ENCODE measurements at regions of chr19 and their contacts with region 1.

Region 1: GRCh38 chr19:42176990-42177685 is 40.3 kb downstream of the DEDD2 start:
- DNase-seq: peak; percentile 85
- ATAC-seq: peak; percentile 84
- H3K4me3 Mint-ChIP-seq: no peak overlapping the region
- H3K27ac Mint-ChIP-seq: no peak overlapping the region
- H3K4me1 Mint-ChIP-seq: peaks cover 18% of the 10 kb centered on the region
- H3K27me3 Mint-ChIP-seq: peaks cover 44% of the 10 kb centered on the region
- CTCF ChIP-seq: no peak

Region 2: GRCh38 chr19:42132851-42133528 is 44.1 kb before region 1 on chr19:
- CTCF ChIA-PET with region 1: interaction called, 50 read pairs
- POLR2A ChIA-PET with region 1: interaction called, 6 read pairs
- DNase-seq: peak; percentile 91
- ATAC-seq: peak; percentile 86
- H3K4me3 Mint-ChIP-seq: peak overlapping the region; percentile 76
- H3K27ac Mint-ChIP-seq: no peak overlapping the region
- H3K4me1 Mint-ChIP-seq: peaks cover 20% of the 10 kb centered on the region
- H3K27me3 Mint-ChIP-seq: peaks cover 30% of the 10 kb centered on the region
- CTCF ChIP-seq: peak; percentile 91

Region 3: GRCh38 chr19:42140125-42140754 is 36.9 kb before region 1 on chr19:
- CTCF ChIA-PET with region 1: interaction called, 50 read pairs
- POLR2A ChIA-PET with region 1: no interaction called
- DNase-seq: peak; percentile 91
- ATAC-seq: peak; percentile 95
- H3K4me3 Mint-ChIP-seq: no peak overlapping the region
- H3K27ac Mint-ChIP-seq: no peak overlapping the region
- H3K4me1 Mint-ChIP-seq: peaks cover 6% of the 10 kb centered on the region; the same call in 1 of the 2 replicates
- H3K27me3 Mint-ChIP-seq: peaks cover 15% of the 10 kb centered on the region
- CTCF ChIP-seq: no peak

Region 4: DNA sequence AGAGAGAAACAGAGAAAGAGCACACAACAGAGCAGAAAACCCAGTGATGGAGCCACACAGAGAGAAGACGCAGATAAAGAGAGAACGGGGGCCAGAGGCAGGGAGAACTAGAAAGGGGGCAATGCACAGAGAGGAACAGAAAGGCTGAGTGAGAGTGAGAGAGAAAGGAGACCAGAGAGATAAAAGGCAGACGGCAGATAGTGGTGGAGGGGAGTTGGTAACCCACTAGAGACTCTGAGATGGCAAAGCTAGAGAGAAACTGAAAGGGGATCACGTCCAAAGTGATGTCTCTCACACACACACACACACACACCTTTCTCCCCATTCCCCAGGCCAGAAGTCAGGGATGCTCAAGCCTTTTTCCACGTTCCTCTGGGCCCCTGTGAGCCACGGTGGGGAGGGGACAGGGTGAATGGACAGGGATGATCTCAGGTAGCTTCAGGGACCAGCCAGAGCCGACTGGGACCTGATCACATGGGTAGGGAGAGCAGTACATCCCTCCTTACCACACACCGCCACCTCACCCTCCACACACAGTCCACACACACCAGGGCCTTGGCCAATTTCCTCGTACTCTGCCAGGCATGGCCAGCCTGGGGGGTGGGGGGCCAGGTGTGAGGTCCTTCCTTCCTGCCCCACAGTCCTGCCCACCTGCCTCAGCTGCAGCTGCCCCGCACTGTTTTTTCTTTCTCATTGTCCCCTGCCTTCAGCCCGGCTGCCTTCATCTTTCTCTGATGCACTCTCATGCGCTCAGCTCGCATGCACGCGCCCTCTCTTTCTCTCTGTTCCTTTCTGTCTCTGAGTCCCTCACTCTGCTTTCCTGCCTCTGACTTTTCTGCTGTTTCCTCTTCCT is 22.4 kb before region 1 on chr19:
- CTCF ChIA-PET with region 1: interaction called, 11 read pairs
- POLR2A ChIA-PET with region 1: no interaction called
- DNase-seq: no peak
- ATAC-seq: no peak
- H3K4me3 Mint-ChIP-seq: no peak overlapping the region
- H3K27ac Mint-ChIP-seq: peak overlapping the region; percentile 43; the same call in 1 of the 2 replicates
- H3K4me1 Mint-ChIP-seq: peaks cover 40% of the 10 kb centered on the region
- H3K27me3 Mint-ChIP-seq: peaks cover 33% of the 10 kb centered on the region
- CTCF ChIP-seq: no peak